ENCODE measurements at regions of chr11 and their contacts with region 1.

Region 1: GRCh38 chr11:10307442-10308207 is 2.8 kb downstream of the ADM start:
- DNase-seq: peak; percentile 49 to 87 (median 74)
- H3K4me3 ChIP-seq: peak overlapping the region; percentile 51 to 90 (median 76)
- H3K27ac ChIP-seq: peak overlapping the region in 47 of 59 donors; percentile 3 to 95 (median 53)
- H3K27me3 ChIP-seq: peaks cover 0 to 6% (median 0%) of the 10 kb centered on the region in 45 donors
- CTCF ChIP-seq: peak; percentile 94 to 100 (median 98)

Region 2: DNA sequence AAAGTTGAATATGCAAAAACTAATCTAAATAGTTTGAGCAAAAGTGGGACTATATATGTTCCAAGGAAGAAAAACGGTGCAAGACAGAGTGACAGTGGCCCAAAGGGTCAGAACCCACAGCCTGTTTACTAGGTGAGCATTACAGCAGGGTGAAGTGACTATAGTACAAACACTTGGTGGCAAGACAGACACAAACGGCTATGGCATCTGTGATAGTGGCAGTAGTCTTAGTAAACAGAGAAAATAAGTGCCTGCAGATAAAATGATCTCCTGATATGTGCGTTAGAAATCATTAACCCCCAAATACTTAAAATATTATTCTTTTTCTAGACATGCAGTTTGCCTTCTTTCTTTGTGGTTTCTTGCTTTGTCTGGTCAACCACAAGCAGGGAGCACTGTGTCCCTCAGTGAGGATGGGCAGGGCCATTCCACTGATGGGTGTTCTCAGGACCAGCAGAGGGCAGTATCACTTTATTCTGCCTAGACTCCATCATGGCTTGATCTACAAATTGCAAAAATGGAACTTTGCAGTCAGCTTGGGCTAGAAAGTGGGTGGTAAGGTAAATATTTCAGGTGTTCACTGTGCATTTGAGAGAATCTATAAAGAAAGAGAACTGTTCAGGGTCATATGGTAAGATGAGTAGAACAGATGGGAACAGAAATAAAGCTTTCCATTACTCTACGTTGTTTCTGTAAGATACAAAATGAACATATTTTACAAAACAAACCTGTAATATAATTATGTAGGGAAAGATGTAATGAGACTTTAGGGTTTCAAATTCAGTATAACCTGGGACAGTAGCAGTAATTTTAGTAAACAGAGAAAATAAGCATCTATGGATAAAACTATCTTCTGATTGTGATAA is 445.5 kb before region 1 on chr11:
- intact Hi-C with region 1: loop called in 1 of 2 experiments (anchors 5 kb)
- DNase-seq: peak in 6 of 10 donors; percentile 11 to 45 (median 32)
- H3K4me3 ChIP-seq: no peak overlapping the region
- H3K27ac ChIP-seq: no peak overlapping the region
- H3K27me3 ChIP-seq: no peaks in the 10 kb centered on the region
- CTCF ChIP-seq: peak; percentile 33 to 82 (median 68)

Region 3: GRCh38 chr11:9972989-9973388 is 334.6 kb before region 1 on chr11:
- intact Hi-C with region 1: loop called in 1 of 2 experiments (anchors 5 kb)
- DNase-seq: no peak
- H3K4me3 ChIP-seq: peak overlapping the region in 1 of 59 donors; percentile 19
- H3K27ac ChIP-seq: no peak overlapping the region
- H3K27me3 ChIP-seq: no peaks in the 10 kb centered on the region
- CTCF ChIP-seq: peak; percentile 37 to 79 (median 68)

Region 4: GRCh38 chr11:10208131-10208575 is 99.5 kb before region 1 on chr11:
- intact Hi-C with region 1: loop called (anchors 2 to 5 kb)
- DNase-seq: no peak
- H3K4me3 ChIP-seq: no peak overlapping the region
- H3K27ac ChIP-seq: no peak overlapping the region
- H3K27me3 ChIP-seq: no peaks in the 10 kb centered on the region
- CTCF ChIP-seq: peak; percentile 58 to 90 (median 78)